ENCODE measurements at regions of chr12 and their contacts with region 1.

Region 1: DNA sequence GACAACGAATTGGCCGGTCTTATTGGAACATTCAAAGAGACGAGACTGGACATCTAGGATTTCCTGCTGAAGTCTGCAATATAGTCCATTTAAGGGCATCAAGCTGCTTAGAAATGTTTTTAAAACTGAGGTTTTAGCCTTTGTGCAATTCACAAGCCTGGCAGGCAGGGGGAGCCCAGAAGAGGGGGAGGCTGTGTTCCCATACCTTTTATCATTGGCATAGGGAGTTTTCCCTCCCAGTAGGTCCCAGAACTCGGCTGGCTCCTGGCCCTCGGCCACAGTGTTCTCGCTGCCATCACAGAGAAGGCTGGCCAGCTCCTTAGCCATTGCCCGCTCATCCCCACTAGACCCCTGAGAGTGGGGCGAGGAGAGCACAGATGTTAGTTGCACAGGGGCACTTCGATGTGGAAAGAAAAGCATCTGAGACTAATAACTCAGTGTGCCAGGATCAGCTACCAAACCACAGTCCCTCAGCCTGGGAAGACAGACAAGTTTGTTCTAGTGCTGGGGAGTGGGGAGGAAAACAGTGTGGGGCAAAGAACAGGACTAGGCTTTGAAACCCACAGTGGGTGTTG is 15.1 kb downstream of the AVIL start:
- DNase-seq: no peak
- H3K4me3 ChIP-seq: no peak overlapping the region
- H3K27ac ChIP-seq: no peak overlapping the region
- H3K27me3 ChIP-seq: no peaks in the 10 kb centered on the region
- CTCF ChIP-seq: peak; percentile 86

Region 2: DNA sequence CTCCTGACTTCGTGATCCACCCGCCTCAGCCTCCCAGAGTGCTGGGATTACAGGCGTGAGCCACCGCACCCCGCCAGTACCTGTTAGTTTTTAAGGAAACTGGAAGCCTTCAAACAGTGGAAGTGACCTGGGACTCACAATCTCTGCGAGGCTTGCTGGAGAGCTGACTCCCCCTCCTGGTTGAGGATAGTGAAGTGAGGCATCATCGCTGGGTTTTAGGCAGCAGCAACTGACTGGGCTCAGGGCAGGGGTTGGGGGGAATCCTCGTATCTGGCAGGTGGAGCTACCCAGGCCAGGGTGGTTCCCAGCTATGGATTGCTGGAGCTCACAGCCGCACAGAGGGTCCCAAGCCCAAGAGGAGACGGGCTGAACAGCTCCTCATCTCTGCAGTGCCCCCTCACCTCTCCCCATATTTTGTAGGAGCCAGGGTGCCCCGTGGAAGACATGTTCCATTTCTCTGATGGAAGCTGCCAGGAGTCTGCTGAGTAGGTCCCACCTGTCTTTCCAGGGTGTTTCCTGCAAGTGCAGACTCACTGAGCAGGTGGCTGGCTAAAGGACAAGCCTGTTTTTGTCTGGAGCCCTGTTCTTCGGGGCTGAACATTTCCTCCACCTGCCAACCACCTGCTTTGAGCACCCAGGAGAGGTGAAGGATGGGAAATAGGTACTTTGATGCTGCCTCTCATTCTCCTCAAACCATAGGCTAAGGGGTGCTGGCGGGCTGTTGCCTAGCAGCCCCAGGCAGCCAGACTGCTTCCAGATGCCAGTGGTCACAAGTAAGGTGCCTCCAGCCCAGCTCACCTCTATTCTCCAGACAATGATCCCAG is 12.0 kb after region 1 on chr12:
- CTCF ChIA-PET with region 1: interaction called, 22 read pairs
- POLR2A ChIA-PET with region 1: no interaction called
- DNase-seq: no peak
- H3K4me3 ChIP-seq: no peak overlapping the region
- H3K27ac ChIP-seq: no peak overlapping the region
- H3K27me3 ChIP-seq: no peaks in the 10 kb centered on the region
- CTCF ChIP-seq: peak; percentile 21; the same call in 1 of the 2 replicates

Region 3: DNA sequence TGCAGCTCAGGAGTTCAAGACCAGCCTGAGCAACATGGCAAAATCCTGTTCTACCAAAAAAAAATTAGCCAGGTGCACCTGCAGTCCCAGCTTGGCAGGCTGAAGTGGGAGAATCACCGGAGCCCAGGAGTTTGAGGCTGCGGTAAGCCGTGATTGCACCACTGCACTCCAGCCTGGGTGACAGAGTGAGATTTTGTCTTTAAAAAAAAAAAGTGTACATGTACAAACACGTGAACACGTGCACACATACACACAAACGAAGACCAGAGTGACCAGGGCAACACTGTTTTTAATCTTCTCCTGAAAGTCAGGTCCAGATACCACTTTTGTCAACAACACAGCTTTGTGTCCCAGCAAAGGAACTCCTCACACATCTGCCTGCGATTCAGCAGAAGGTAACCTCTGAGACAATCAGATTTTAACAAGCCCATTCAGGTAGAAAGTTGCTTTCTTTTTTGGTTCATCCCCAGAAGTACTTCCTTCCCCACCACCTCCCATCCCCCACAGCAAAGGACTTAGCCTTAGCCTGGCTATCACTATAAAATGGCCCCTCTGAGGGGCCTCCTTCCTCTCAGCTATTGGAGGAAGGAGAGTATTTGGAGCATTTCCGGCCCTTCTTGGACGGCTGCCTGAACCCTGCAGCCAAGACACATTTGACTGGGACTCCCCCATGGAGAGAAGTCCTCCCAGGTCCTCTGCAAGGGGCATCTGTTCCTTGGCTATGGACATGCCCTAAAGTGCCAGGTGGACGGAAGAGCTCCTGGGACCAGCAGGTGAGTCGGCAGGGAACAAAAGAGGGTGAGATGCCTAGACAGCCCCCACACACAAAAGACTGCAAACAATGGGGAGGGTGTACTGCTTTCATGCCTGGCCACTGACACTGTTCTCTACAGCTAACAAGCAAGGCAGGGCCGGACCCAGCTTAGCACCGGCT is 33.3 kb after region 1 on chr12:
- CTCF ChIA-PET with region 1: interaction called, 11 read pairs
- POLR2A ChIA-PET with region 1: no interaction called
- DNase-seq: peak; percentile 46
- H3K4me3 ChIP-seq: peak overlapping the region; percentile 45
- H3K27ac ChIP-seq: peak overlapping the region; percentile 48
- H3K27me3 ChIP-seq: no peaks in the 10 kb centered on the region
- CTCF ChIP-seq: no peak